ENCODE measurements at regions of chr19 and their contacts with region 1.

Region 1: DNA sequence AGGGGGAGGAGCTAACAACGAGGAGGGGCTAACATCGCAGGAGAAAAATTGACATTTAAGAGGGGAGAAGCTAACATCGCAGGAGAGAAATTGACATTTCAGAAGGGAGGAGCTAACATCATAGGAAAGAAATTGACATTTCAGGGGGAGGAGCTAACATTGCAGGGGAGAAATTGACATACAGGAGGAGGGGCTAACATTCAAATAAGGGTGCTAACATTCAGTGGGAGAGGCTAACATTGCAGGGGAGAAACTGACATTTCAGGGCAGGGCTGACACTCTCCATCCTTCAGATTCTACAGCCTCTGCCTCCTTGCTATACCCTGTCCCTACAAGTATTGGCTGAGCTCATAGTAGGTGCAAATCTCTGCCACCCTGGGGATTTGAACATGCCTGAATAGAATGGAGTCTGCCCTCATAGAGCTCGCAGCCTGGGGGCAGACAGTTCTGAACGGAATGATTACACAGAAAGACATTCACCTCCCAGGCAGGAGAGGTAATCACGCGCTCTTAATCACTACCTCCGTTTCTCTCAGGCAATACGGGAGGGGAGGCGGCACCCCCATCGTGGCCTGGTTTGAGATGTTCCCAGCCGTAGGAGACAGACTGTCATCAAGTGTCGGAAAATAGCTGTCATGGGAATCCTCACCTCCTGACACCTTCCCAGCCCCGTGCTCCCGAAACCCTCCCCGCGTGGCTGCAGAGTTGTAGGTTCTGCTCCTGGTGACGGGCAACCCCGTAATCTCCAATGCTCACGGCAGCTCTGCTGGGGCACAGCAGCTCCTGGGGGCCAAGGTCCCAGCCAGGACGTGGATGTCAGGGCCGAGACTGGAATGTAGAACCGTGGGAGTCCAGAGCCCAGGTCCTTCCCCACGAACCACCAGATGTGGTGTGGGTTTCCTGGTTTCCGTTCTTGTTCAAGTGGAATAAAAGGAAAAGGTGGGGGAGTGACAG is 9.5 kb downstream of the GPR32 start:
- DNase-seq: no peak
- H3K4me3 ChIP-seq: no peak overlapping the region
- H3K27ac ChIP-seq: no peak overlapping the region
- H3K4me1 ChIP-seq: peaks cover 7% of the 10 kb centered on the region
- H3K27me3 ChIP-seq: no peaks in the 10 kb centered on the region
- CTCF ChIP-seq: no peak
- POLR2A ChIP-seq: no peak

Region 2: GRCh38 chr19:50357178-50358100 is 422.3 kb before region 1 on chr19:
- intact Hi-C with region 1: loop called (anchors 5 kb)
- DNase-seq: no peak
- H3K4me3 ChIP-seq: peak overlapping the region; percentile 48 to 53
- H3K27ac ChIP-seq: peak overlapping the region; percentile 90
- H3K4me1 ChIP-seq: peaks cover 12% of the 10 kb centered on the region
- H3K27me3 ChIP-seq: no peaks in the 10 kb centered on the region
- CTCF ChIP-seq: peak; percentile 74 to 88 (median 81)
- POLR2A ChIP-seq: no peak

Region 3: GRCh38 chr19:50705422-50706019 is 74.3 kb before region 1 on chr19:
- intact Hi-C with region 1: no loop called
- DNase-seq: no peak
- H3K4me3 ChIP-seq: no peak overlapping the region
- H3K27ac ChIP-seq: no peak overlapping the region
- H3K4me1 ChIP-seq: no peaks in the 10 kb centered on the region
- H3K27me3 ChIP-seq: no peaks in the 10 kb centered on the region
- CTCF ChIP-seq: peak in 2 of 3 experiments; percentile 30 to 41
- POLR2A ChIP-seq: no peak

Region 4: DNA sequence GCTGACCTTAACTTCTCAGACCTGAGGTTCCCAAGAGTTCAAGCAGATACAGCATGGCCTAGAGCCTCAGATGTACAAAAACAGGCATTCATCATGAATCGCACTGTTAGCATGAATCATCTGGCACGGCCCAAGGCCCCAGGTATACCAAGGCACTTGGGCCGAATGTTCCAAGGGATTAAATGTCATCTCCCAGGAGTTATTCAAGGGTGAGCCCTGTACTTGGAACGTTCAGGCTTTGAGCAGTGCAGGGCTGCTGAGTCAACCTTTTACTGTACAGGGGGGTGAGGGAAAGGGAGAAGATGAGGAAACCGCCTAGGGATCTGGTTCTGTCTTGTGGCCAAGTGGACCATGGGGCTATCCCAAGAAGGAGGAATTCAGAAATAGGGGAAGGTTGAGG is 81.2 kb after region 1 on chr19:
- intact Hi-C with region 1: no loop called
- DNase-seq: no peak
- H3K4me3 ChIP-seq: no peak overlapping the region
- H3K27ac ChIP-seq: no peak overlapping the region
- H3K4me1 ChIP-seq: no peaks in the 10 kb centered on the region
- H3K27me3 ChIP-seq: no peaks in the 10 kb centered on the region
- CTCF ChIP-seq: no peak
- POLR2A ChIP-seq: no peak

Region 5: DNA sequence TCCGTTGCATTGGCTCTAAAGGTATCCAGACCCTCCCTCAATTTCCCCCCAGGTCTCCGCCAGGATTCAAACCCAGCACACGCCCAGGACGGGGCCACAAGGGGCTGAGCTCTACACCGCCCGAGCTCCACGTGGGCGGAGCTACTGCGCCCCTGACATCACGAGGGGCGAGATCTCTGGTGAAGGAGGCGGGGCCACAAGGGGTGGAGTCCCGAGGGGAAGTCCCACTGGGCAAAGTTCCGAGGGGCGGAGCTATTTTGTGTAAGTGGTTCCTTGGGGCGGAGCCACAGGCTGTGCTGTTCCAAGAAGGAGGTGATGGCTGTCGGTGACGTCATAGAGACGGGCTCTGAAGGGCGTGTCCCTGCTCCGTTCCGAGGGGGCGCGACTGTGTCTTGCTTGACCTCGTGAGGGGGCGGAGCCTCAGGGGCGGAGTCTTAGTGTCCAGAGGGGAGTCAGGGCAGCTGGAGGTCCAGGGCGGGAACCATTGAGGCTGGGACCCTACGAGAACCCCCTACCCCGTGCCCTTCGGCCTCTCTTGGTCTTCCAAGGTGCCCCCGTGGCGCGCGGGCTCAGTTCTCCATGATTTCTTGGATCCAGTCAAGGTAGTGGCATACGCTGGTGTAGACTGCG is 222.9 kb after region 1 on chr19:
- intact Hi-C with region 1: no loop called
- DNase-seq: no peak
- H3K4me3 ChIP-seq: no peak overlapping the region
- H3K27ac ChIP-seq: no peak overlapping the region
- H3K4me1 ChIP-seq: no peaks in the 10 kb centered on the region
- H3K27me3 ChIP-seq: no peaks in the 10 kb centered on the region
- CTCF ChIP-seq: no peak
- POLR2A ChIP-seq: no peak